Sigmoid colon (tissue), 7 donors: ENCODE measurements at regions of chr5 and their contacts with region 1.

Region 1: GRCh38 chr5:39714036-39714698 is 289.4 kb upstream of the DAB2 start:
- DNase-seq: no peak
- H3K4me3 ChIP-seq: no peak overlapping the region
- H3K27ac ChIP-seq: no peak overlapping the region
- H3K4me1 ChIP-seq: peaks cover 0 to 5% (median 0%) of the 10 kb centered on the region in 4 donors
- H3K27me3 ChIP-seq: no peaks in the 10 kb centered on the region
- CTCF ChIP-seq: peak in 3 of 4 experiments; percentile 52 to 69 (median 58)
- EP300 ChIP-seq: no peak
- POLR2A ChIP-seq: no peak

Region 2: DNA sequence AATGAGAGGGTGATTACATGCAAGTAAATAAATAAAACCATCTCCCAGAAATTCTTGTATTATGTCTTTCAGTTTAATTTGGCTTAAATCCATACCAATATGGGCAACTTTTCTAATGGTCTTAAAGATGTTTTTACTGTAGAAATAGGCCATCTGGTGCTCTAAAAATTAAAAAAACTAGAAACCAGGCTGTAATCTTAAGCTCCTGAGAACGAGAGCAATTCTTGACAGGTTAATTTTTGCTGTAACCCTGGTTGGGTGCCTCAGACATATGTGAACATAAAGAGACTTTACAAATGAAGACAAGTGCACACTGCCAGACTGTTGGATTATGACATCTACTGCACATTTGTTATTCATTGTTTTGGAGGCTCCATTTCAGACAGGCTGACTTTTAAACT is 42.6 kb before region 1 on chr5:
- intact Hi-C with region 1: no loop called
- DNase-seq: no peak
- H3K4me3 ChIP-seq: no peak overlapping the region
- H3K27ac ChIP-seq: no peak overlapping the region
- H3K4me1 ChIP-seq: no peaks in the 10 kb centered on the region
- H3K27me3 ChIP-seq: no peaks in the 10 kb centered on the region
- CTCF ChIP-seq: no peak
- EP300 ChIP-seq: no peak
- POLR2A ChIP-seq: no peak

Region 3: GRCh38 chr5:39948867-39949468 is 234.8 kb after region 1 on chr5:
- intact Hi-C with region 1: loop called (anchors 10 kb)
- DNase-seq: peak; percentile 68
- H3K4me3 ChIP-seq: no peak overlapping the region
- H3K27ac ChIP-seq: no peak overlapping the region
- H3K4me1 ChIP-seq: no peaks in the 10 kb centered on the region
- H3K27me3 ChIP-seq: no peaks in the 10 kb centered on the region
- CTCF ChIP-seq: peak; percentile 27 to 67 (median 44)
- EP300 ChIP-seq: no peak
- POLR2A ChIP-seq: no peak